Endothelial cell of umbilical vein (primary cell): ENCODE measurements at regions of chr4 and their contacts with region 1.

Region 1: DNA sequence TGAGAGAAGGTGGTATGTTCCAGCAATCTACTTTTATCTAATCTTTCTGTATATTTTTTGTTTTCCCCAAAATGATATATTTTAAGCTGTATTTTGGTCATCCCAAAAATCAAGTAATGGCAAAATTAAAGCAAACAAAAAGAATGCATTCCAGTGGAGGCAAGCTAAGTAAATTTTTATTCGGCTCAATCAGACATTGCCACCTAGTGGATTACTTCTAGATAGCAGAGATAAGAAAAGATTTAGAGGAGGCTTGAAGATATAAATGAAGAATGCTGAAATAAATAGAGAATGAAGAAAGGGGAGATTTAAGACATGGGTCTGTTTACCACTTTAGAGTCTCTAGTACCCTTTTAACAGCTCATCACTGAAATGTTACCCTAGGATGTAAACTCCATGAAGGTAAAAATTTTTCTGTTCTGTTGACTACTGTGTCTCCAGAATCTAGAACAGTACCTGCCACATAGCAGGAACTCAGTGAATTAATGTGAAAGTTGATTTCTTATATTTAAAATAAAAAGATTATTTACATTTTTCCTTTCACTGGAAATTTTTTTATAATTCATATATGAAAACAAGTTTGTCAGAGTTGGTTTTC is 110.9 kb upstream of the ANK2 start:
- DNase-seq: peak; percentile 40
- H3K4me3 ChIP-seq: no peak overlapping the region
- H3K27ac ChIP-seq: no peak overlapping the region
- H3K4me1 ChIP-seq: no peaks in the 10 kb centered on the region
- H3K27me3 ChIP-seq: no peaks in the 10 kb centered on the region
- CTCF ChIP-seq: peak; percentile 43 to 45
- POLR2A ChIP-seq: no peak

Region 2: DNA sequence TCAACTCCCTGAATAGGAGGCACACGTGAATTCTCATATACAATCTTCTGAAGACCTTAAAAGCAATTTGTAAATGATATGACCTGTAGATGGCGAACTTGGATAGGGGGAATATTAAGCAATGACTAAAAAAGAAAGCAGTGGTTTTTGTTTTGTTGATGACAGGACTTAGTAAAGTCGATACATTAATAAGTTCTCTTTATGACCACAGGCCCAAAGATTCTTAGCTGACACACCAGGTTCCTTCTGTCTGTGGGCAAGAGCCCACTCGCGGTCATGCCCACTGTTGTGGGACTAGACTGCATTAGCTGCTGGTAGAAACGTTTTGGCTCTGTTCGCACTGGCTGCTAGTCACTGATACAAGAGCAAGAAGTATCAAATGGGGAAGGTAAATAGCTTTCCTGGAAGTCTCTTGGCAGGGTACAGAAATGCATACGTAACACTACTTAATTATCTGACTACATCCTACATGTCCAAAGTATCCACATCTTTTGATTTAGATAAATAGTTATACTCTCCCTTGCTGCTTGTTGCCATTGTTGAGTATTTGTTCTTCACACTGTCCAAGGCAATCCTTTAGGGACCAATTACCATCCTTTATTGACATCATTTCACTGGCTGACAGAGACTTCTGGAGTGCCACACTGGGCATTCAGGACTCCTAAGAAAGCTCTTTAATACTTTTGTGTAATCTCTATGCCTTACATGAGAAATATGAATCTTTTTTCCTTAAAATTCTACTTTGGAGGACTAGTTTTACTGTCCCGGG is 610.4 kb before region 1 on chr4:
- CTCF ChIA-PET with region 1: interaction called, 4 read pairs
- POLR2A ChIA-PET with region 1: no interaction called
- dilution Hi-C with region 1: no loop called
- intact Hi-C with region 1: loop called (anchors 5 kb)
- DNase-seq: peak; percentile 60
- H3K4me3 ChIP-seq: no peak overlapping the region
- H3K27ac ChIP-seq: no peak overlapping the region
- H3K4me1 ChIP-seq: no peaks in the 10 kb centered on the region
- H3K27me3 ChIP-seq: no peaks in the 10 kb centered on the region
- CTCF ChIP-seq: peak in 1 of 2 donors; percentile 34
- POLR2A ChIP-seq: no peak

Region 3: DNA sequence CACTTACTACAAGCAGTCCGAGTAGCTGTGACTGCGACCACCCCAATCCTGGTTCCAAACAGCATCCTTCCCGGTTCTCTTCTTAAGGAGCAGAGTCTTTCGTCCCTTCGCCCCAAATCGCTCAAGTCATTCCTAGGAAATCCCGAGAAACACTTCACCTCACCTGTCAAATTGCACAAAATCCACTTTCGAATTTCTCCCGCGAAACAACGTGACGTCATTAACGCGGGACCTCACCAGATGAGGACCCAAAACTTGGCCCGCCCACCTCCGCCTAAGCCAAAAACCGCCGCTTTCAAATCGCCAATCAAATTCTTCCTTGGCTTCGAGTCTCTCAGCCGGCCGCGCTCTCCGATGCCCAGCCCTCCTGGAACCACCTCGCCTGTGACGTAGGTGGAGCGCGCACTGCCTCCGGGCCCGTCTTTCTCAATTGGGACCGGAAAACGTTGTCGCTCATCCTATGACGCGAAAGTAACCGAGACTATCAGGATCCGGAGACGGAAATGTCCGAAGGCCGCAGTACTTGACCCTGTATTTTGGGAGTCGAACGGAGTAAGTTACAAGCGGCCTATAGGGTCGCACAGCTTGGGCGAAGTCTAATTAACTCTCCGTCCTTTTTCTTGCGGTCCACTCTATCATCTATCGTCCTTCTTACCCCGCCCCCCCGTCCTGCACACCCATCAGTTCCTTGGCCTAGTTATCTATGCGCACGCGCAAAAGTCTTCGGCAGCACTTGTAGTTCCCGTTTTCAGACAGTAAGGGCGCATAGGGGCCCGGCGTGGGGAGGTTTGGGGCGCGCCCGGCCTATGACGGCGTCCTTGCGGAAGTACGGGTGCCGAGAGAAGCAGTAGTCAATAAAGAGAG is 301.6 kb before region 1 on chr4 and contains the starts of genes LARP7 and ZGRF1:
- CTCF ChIA-PET with region 1: interaction called, 5 read pairs
- POLR2A ChIA-PET with region 1: no interaction called
- dilution Hi-C with region 1: no loop called
- intact Hi-C with region 1: loop called (anchors 2 kb)
- DNase-seq: peak; percentile 99
- H3K4me3 ChIP-seq: peak within 1 kb of the TSS; percentile 85 to 97 (median 96)
- H3K27ac ChIP-seq: peak within 1 kb of the TSS; percentile 91
- H3K4me1 ChIP-seq: peaks cover 16% of the 10 kb centered on the region
- H3K27me3 ChIP-seq: no peaks in the 10 kb centered on the region
- CTCF ChIP-seq: peak; percentile 84 to 88
- POLR2A ChIP-seq: no peak
- total RNA-seq, gene LARP7: 30.8 and 35.1 TPM in 2 replicates
- total RNA-seq, gene ZGRF1: 14.0 and 14.4 TPM in 2 replicates

Region 4: GRCh38 chr4:112853662-112854256 is 84.8 kb before region 1 on chr4:
- CTCF ChIA-PET with region 1: interaction called, 18 read pairs
- POLR2A ChIA-PET with region 1: no interaction called
- dilution Hi-C with region 1: no loop called
- intact Hi-C with region 1: loop called (anchors 2 kb)
- DNase-seq: no peak
- H3K4me3 ChIP-seq: no peak overlapping the region
- H3K27ac ChIP-seq: no peak overlapping the region
- H3K4me1 ChIP-seq: no peaks in the 10 kb centered on the region
- H3K27me3 ChIP-seq: no peaks in the 10 kb centered on the region
- CTCF ChIP-seq: no peak
- POLR2A ChIP-seq: no peak

Region 5: DNA sequence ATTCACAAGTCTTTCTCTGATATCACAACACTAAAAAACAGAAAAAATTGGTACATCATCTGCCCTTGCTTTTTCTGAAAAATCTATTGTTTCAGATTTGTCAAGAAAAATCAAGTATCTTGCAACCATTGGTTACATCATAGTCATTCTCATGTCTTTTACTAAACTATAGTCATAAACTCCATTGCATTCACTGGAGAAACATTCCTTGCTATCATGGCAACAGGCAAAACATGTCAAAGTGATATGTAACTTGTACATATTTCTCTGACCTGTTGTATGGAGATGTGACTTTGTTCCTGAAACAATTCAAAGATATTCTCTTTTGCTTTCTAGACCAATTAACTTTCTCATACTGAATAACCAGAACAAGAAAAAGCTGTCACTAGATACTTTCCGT is 11.0 kb before region 1 on chr4:
- CTCF ChIA-PET with region 1: interaction called, 18 read pairs
- POLR2A ChIA-PET with region 1: no interaction called
- dilution Hi-C with region 1: no loop called
- intact Hi-C with region 1: no loop called
- DNase-seq: no peak
- H3K4me3 ChIP-seq: no peak overlapping the region
- H3K27ac ChIP-seq: no peak overlapping the region
- H3K4me1 ChIP-seq: no peaks in the 10 kb centered on the region
- H3K27me3 ChIP-seq: peaks cover 0 to 4% of the 10 kb centered on the region in 2 experiments
- CTCF ChIP-seq: no peak
- POLR2A ChIP-seq: no peak

Region 6: DNA sequence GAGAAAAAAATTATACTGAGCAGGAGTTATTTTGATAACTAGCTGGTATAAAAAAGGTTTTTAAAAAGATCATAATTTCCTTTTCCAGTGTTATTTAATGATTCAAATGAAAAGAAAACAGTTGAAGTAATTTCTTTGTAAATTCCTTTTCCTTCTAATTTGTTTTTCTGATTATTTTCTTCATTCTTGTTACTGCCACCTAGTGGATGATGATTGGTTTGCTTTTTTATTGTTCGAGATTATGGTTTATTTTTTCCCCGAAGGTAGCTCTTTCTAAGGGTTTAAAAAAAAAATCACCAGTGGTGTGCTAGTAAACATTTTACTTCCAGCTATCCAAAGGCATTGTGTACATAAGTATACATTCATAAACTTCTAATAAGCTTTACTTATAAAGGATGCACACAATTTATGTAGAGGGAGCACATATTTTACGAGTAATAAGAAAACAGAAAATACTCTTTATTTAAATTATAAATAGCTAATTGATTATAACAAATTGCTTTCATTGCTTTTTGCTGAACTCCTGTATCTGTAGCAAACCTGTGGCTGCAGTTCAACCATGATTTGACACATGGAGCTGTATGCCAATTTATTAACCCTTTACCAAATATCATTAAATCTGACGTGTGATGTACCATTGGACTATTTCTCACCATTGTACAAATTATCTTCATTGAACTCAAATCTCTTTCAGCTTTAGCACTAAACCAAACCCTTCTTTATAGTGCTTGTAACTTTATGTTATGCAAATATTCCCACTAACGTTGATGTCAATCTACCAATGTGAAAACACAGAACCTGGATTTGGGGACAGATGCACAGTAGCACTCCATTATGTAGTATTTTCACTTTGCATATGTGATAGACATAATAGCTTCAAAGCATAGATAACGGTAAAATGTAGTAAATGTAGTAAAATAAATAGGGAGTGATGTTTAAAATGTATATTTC is 13.1 kb after region 1 on chr4:
- CTCF ChIA-PET with region 1: interaction called, 103 read pairs
- POLR2A ChIA-PET with region 1: no interaction called
- dilution Hi-C with region 1: no loop called
- intact Hi-C with region 1: no loop called
- DNase-seq: peak; percentile 39
- H3K4me3 ChIP-seq: no peak overlapping the region
- H3K27ac ChIP-seq: no peak overlapping the region
- H3K4me1 ChIP-seq: no peaks in the 10 kb centered on the region
- H3K27me3 ChIP-seq: peaks cover 0 to 3% of the 10 kb centered on the region in 2 experiments
- CTCF ChIP-seq: peak; percentile 19 to 25
- POLR2A ChIP-seq: no peak